ENCODE measurements at regions of chr6 and their contacts with region 1.

Region 1: GRCh38 chr6:49849213-49849907 is 17.0 kb downstream of the CRISP1 start:
- DNase-seq: peak; percentile 72
- H3K4me3 ChIP-seq: no peak overlapping the region
- H3K27ac ChIP-seq: no peak overlapping the region
- H3K4me1 ChIP-seq: no peaks in the 10 kb centered on the region
- CTCF ChIP-seq: peak; percentile 84

Region 2: DNA sequence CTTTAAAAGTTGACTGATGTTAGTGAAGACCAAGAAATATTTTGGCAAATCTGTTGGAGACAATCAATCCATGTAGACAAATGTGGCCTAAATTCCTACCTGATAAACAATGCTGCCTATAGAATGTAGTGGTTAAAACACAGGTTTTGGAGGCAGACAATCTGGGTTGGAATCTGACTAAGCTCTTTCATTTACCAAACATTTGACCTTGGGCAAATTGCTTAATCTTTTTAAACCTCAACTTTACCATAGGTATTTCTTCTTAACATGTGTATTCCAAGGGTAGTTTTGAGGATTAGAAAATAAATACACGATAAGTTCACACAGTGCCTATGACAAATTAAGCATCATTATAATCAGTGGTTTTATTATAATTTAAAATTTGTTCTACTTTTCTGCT is 224.2 kb before region 1 on chr6:
- CTCF ChIA-PET with region 1: no interaction called
- POLR2A ChIA-PET with region 1: no interaction called
- intact Hi-C with region 1: loop called (anchors 1 kb)
- DNase-seq: no peak
- H3K4me3 ChIP-seq: no peak overlapping the region
- H3K27ac ChIP-seq: no peak overlapping the region
- H3K4me1 ChIP-seq: no peaks in the 10 kb centered on the region
- CTCF ChIP-seq: no peak

Region 3: GRCh38 chr6:49835140-49835539 is 14.2 kb before region 1 on chr6:
- CTCF ChIA-PET with region 1: no interaction called
- POLR2A ChIA-PET with region 1: no interaction called
- intact Hi-C with region 1: no loop called
- DNase-seq: no peak
- H3K4me3 ChIP-seq: no peak overlapping the region
- H3K27ac ChIP-seq: no peak overlapping the region
- H3K4me1 ChIP-seq: no peaks in the 10 kb centered on the region
- CTCF ChIP-seq: no peak

Region 4: GRCh38 chr6:50071921-50072320 is 222.6 kb after region 1 on chr6:
- CTCF ChIA-PET with region 1: no interaction called
- POLR2A ChIA-PET with region 1: no interaction called
- intact Hi-C with region 1: no loop called
- DNase-seq: no peak
- H3K4me3 ChIP-seq: no peak overlapping the region
- H3K27ac ChIP-seq: no peak overlapping the region
- H3K4me1 ChIP-seq: no peaks in the 10 kb centered on the region
- CTCF ChIP-seq: no peak

Measured in OCI-LY7 (cell line).